ENCODE measurements at regions of chr22 and their contacts with region 1.

Region 1: GRCh38 chr22:38398609-38399461 is 56.2 kb downstream of the KCNJ4 start:
- DNase-seq: peak; percentile 72 to 91 (median 86)
- ATAC-seq: peak; percentile 73
- H3K4me3 ChIP-seq: peak overlapping the region; percentile 68
- H3K4me3 Mint-ChIP-seq: peak overlapping the region; percentile 86
- H3K27ac ChIP-seq: no peak overlapping the region
- H3K27ac Mint-ChIP-seq: peak overlapping the region; percentile 75
- H3K4me1 ChIP-seq: peaks cover 15% of the 10 kb centered on the region
- H3K4me1 Mint-ChIP-seq: peaks cover 35% of the 10 kb centered on the region
- H3K27me3 ChIP-seq: no peaks in the 10 kb centered on the region
- H3K27me3 Mint-ChIP-seq: no peaks in the 10 kb centered on the region
- CTCF ChIP-seq: no peak

Region 2: DNA sequence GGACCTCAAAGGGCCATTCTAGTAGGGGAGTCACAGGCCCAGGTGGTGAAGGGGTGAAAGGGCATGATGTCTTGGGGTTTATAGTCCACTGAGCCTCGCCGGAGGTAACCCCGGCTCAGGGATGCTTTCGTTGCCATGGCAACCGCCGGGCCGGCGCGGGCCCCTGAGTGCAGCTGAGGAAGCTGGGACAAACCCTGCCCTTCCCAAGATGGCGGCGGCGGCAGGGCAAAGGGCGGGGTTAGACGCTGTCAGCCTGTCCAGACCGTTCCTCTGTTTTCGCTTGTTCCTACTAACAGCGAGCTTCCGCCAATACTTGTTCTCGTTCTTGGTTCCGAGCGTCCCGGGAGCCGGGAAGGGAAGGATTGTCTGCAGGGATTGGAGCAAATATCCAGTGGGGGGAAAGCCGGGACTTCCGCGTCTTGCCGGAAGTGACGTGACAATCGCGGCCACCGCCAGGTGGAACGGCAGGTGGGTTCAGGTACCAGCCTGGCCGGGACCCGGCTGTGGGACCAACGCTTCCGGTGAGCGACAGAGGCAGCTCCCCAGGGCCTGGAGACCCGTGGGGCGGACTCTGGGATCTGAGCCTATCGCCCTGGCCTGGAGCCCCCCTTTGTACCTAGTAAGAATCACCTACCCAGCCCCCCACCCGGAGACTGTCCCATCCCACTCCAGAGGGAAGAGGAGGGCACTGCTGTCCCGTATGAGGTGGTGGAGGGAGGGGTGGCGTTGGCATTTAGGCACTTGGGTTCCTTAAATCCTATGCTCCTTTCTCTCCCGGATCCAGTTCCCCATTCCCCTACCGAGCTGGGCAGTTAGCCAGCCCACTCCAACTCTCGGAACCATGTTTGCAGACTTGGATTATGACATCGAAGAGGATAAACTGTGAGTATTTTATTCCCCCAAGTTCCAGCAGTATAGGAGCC is 341.6 kb before region 1 on chr22 and contains the start of gene PICK1:
- CTCF ChIA-PET with region 1: no interaction called
- POLR2A ChIA-PET with region 1: interaction called, 3 read pairs
- intact Hi-C with region 1: loop called in 1 of 2 experiments (anchors 5 kb)
- DNase-seq: peak; percentile 56 to 92 (median 74)
- ATAC-seq: peak; percentile 84
- H3K4me3 ChIP-seq: peak within 1 kb of the TSS; percentile 91
- H3K4me3 Mint-ChIP-seq: peak within 1 kb of the TSS; percentile 98
- H3K27ac ChIP-seq: peak within 1 kb of the TSS; percentile 84 to 94
- H3K27ac Mint-ChIP-seq: peak within 1 kb of the TSS; percentile 99
- H3K4me1 ChIP-seq: peaks cover 27% of the 10 kb centered on the region
- H3K4me1 Mint-ChIP-seq: peaks cover 20% of the 10 kb centered on the region
- H3K27me3 ChIP-seq: no peaks in the 10 kb centered on the region
- H3K27me3 Mint-ChIP-seq: no peaks in the 10 kb centered on the region
- CTCF ChIP-seq: no peak
- total RNA-seq, gene PICK1: 21.2 to 25.6 TPM

Region 3: GRCh38 chr22:38696606-38697424 is 298.0 kb after region 1 on chr22:
- CTCF ChIA-PET with region 1: no interaction called
- POLR2A ChIA-PET with region 1: interaction called, 3 read pairs
- intact Hi-C with region 1: loop called in 1 of 2 experiments (anchors 10 kb)
- DNase-seq: peak in 10 of 14 experiments; percentile 12 to 68 (median 37)
- ATAC-seq: no peak
- H3K4me3 ChIP-seq: no peak overlapping the region
- H3K4me3 Mint-ChIP-seq: peak overlapping the region; percentile 95
- H3K27ac ChIP-seq: peak overlapping the region in 1 of 2 donors; percentile 18
- H3K27ac Mint-ChIP-seq: peak overlapping the region; percentile 100
- H3K4me1 ChIP-seq: peaks cover 55% of the 10 kb centered on the region
- H3K4me1 Mint-ChIP-seq: peaks cover 72% of the 10 kb centered on the region
- H3K27me3 ChIP-seq: no peaks in the 10 kb centered on the region
- H3K27me3 Mint-ChIP-seq: peaks cover 5% of the 10 kb centered on the region
- CTCF ChIP-seq: no peak

Region 4: DNA sequence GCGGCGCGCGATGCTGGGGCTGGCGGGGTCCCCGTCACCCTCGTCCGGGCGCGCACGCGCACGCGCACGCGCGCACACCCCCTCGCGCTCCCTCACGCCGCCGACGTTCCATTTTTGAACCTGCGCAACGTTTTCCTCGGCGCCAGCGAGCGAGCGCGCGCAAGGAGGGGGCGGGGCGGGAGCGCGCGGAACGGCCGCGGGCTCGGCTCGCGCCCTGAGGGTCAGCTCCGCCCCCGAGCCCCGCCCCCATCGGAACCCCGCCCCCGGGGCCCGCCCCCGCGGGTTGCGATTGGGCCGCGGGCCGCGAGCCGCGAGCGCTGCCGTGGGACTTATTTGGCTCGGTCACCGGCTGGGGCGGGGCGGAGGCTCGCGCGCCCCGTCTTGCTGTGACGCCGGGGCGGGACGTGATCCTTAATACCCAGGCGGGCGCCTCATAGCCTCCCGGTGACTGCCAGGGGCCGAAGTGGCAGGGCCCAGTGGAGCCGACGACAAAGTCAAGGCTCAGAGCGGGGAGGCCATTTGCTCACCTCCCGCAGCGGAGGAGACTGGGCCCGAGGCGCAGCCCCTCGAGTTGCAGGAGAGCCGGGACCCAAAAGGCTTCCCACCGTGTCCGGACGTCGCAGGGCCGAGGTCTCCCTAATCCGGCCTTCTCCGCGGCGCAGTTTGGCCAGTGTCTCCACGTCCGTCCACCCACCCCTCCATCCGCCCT is 753.8 kb after region 1 on chr22 and contains the start of gene CBX7:
- CTCF ChIA-PET with region 1: no interaction called
- POLR2A ChIA-PET with region 1: no interaction called
- intact Hi-C with region 1: loop called in 1 of 2 experiments (anchors 5 kb)
- DNase-seq: peak; percentile 84 to 98 (median 94)
- ATAC-seq: peak; percentile 83
- H3K4me3 ChIP-seq: peak within 1 kb of the TSS; percentile 94
- H3K4me3 Mint-ChIP-seq: peak within 1 kb of the TSS; percentile 94
- H3K27ac ChIP-seq: peak within 1 kb of the TSS; percentile 83 to 86
- H3K27ac Mint-ChIP-seq: peak within 1 kb of the TSS; percentile 100
- H3K4me1 ChIP-seq: peaks cover 54% of the 10 kb centered on the region
- H3K4me1 Mint-ChIP-seq: peaks cover 39% of the 10 kb centered on the region
- H3K27me3 ChIP-seq: no peaks in the 10 kb centered on the region
- H3K27me3 Mint-ChIP-seq: no peaks in the 10 kb centered on the region
- CTCF ChIP-seq: no peak
- total RNA-seq, gene CBX7: 48.6 to 49.1 TPM